Gastrocnemius medialis (tissue), 4 donors: ENCODE measurements at regions of chr2 and their contacts with region 1.

Region 1: GRCh38 chr2:70214953-70215549 is 24.2 kb upstream of the C2orf42 start:
- DNase-seq: no peak
- ATAC-seq: no peak
- H3K4me3 ChIP-seq: no peak overlapping the region
- H3K27ac ChIP-seq: no peak overlapping the region
- H3K4me1 ChIP-seq: no peaks in the 10 kb centered on the region
- H3K27me3 ChIP-seq: no peaks in the 10 kb centered on the region
- CTCF ChIP-seq: no peak
- POLR2A ChIP-seq: no peak

Region 2: GRCh38 chr2:70161069-70161534 is 53.9 kb before region 1 on chr2:
- in situ Hi-C with region 1: no loop called
- intact Hi-C with region 1: loop called (anchors 5 kb)
- DNase-seq: no peak
- ATAC-seq: no peak
- H3K4me3 ChIP-seq: no peak overlapping the region
- H3K27ac ChIP-seq: no peak overlapping the region
- H3K4me1 ChIP-seq: no peaks in the 10 kb centered on the region
- H3K27me3 ChIP-seq: no peaks in the 10 kb centered on the region
- CTCF ChIP-seq: no peak
- POLR2A ChIP-seq: no peak

Region 3: GRCh38 chr2:70583091-70583490 is 368.0 kb after region 1 on chr2:
- in situ Hi-C with region 1: no loop called
- intact Hi-C with region 1: no loop called
- DNase-seq: no peak
- ATAC-seq: no peak
- H3K4me3 ChIP-seq: no peak overlapping the region
- H3K27ac ChIP-seq: no peak overlapping the region
- H3K4me1 ChIP-seq: no peaks in the 10 kb centered on the region
- H3K27me3 ChIP-seq: no peaks in the 10 kb centered on the region
- CTCF ChIP-seq: no peak
- POLR2A ChIP-seq: no peak